Aorta (tissue), 5 donors: ENCODE measurements at regions of chr3 and their contacts with region 1.

Region 1: GRCh38 chr3:195863121-195864006 is 45.0 kb downstream of the TNK2 start:
- DNase-seq: peak; percentile 94 to 98
- ATAC-seq: peak; percentile 95
- H3K4me3 ChIP-seq: no peak overlapping the region
- H3K27ac ChIP-seq: peak overlapping the region; percentile 15 to 55
- H3K4me1 ChIP-seq: no peaks in the 10 kb centered on the region
- H3K27me3 ChIP-seq: no peaks in the 10 kb centered on the region

Region 2: DNA sequence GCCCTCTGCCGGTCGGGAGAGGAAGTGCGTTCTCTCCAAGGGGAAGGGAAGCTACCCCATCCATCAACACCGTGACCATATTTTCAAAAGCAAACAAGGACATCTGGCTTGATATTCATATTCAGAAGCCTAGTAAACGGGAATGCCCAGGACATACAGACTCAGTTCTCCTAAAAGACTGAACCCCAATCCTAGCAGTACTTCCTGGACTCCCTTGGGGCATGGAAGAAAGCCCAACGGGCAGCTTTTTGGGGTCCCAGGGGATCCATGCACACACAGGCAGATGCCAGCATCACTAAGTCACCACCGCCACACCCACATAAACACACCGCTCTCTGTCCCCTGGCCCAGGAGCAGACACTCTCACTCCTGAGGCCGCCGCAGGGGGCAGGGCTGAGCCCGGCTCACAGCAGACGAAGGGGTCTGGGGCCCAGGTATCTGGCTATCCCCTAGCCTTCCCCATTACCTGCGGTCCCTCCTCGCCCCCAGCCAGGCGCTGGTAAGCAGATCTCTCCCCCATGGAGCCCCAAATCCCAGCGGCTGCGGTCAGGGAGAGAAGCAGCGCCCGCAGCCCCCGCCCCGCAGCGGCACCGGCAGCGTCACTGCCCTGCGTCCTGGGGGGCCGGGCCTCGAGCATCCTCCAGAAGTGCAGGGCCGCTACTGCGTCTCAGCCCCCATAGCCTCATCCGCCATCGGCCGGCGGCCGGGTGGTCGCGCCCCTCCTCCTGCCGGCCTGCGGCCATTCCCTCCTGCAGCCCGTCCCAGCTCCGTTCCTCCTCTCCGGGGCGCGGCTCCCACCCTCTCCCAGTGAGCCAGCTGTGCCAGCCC is 31.6 kb after region 1 on chr3:
- intact Hi-C with region 1: loop called (anchors 1 to 2 kb)
- DNase-seq: peak; percentile 70 to 88
- ATAC-seq: peak; percentile 39
- H3K4me3 ChIP-seq: peak overlapping the region; percentile 46 to 66
- H3K27ac ChIP-seq: peak overlapping the region; percentile 56 to 76
- H3K4me1 ChIP-seq: no peaks in the 10 kb centered on the region
- H3K27me3 ChIP-seq: no peaks in the 10 kb centered on the region